Dendritic cell treated with granulocyte-macrophage colony-stimulating factor and Interleukin-4, amounts not matched to agents 40 ng/mL and 50 ng/mL, for 4 days (primary cell): ENCODE measurements at regions of chr5 and their contacts with region 1.

Region 1: DNA sequence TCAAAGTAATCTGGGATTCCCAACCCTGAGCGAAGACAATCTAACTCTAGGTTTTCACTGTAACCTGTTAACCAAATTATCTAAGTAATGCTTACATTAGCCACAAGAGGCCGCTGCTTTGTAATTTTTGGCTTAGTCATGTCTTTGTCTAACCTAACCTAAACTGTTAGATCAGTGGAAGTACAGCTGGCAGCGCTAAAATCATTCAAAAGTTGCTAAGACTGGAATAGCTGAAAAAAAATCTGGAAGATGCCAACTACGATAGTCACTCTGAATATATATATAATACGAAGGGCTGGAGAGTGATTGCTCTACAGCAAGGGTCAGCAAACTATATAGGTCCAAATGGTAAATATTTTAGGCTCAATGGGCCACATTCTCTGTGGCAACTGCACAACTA is 60.2 kb downstream of the FBXO38 start:
- H3K4me3 Mint-ChIP-seq: no peak overlapping the region
- H3K27ac Mint-ChIP-seq: no peak overlapping the region
- H3K4me1 Mint-ChIP-seq: no peaks in the 10 kb centered on the region
- H3K27me3 Mint-ChIP-seq: no peaks in the 10 kb centered on the region

Region 2: GRCh38 chr5:148425808-148426207 is 18.2 kb before region 1 on chr5:
- intact Hi-C with region 1: no loop called
- H3K4me3 Mint-ChIP-seq: no peak overlapping the region
- H3K27ac Mint-ChIP-seq: peak overlapping the region; percentile 28
- H3K4me1 Mint-ChIP-seq: peaks cover 8% of the 10 kb centered on the region
- H3K27me3 Mint-ChIP-seq: no peaks in the 10 kb centered on the region

Region 3: GRCh38 chr5:148482691-148483462 is 38.9 kb after region 1 on chr5:
- intact Hi-C with region 1: loop called (anchors 2 kb)
- H3K4me3 Mint-ChIP-seq: peak overlapping the region; percentile 48
- H3K27ac Mint-ChIP-seq: no peak overlapping the region
- H3K4me1 Mint-ChIP-seq: peaks cover 8% of the 10 kb centered on the region
- H3K27me3 Mint-ChIP-seq: peaks cover 15% of the 10 kb centered on the region

Region 4: DNA sequence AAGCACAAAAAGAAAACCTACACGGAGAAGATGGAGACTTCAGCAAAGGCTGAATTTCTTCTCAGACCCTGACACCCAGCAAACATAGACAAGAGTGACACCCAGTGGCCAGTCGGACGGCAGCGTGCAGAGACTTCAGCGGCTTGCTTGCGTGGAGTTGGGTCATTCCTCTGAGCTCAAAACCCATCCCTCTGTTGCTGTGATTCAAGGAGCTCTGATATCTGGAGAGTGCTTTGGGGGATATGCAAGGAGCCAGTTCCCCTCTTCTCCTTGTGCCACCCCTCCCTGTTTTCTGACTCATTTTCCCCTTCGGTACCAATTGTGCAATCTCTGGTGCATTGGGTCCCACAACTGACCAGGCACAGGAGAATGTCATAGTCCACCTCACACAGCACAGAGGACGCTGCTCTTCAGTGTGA is 591.4 kb after region 1 on chr5:
- intact Hi-C with region 1: loop called (anchors 1 kb)
- H3K4me3 Mint-ChIP-seq: no peak overlapping the region
- H3K27ac Mint-ChIP-seq: peak overlapping the region; percentile 3
- H3K4me1 Mint-ChIP-seq: peaks cover 36% of the 10 kb centered on the region
- H3K27me3 Mint-ChIP-seq: no peaks in the 10 kb centered on the region

Region 5: DNA sequence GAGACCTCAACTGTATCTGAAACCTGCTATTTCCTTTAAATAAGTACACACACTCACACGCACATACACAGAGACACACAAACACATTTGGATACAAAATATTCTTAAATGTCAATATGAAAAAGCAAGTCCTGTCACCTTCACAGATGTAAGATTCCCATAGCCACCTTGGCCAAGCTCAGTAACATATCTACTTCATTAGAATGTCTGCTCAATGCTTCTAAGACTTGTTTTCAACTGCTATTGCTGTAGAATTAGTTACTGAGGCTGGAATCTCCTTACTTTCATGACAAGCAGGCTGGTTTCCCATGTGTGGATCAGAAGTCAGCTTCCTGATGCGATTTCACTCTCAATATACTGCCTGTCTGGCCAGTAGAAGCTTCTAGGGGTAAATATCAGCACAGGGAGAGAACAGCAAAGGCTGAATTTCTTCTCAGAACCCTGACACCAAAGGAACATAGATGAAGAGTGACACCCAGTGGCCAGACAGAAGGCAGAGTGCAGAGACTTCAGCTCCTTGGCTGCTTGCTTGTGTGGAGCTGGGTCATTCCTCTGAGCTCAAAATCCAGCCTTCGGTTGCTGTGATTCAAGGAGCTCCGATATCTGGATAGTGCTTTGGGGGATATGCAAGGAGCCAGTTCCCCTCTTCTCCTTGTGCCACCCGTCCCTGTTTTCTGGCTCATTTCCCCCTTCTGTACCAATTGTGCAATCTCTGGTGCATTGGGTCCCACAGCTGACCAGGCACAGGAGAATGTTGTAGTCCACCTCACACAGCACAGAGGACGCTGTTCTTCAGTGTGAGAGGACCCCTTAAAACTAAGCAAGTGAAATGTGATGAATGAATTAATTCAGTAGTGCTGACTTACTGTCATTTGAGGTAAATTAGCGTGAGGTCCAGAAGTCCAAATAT is 670.7 kb after region 1 on chr5:
- intact Hi-C with region 1: loop called (anchors 10 kb)
- H3K4me3 Mint-ChIP-seq: no peak overlapping the region
- H3K27ac Mint-ChIP-seq: no peak overlapping the region
- H3K4me1 Mint-ChIP-seq: peaks cover 24% of the 10 kb centered on the region
- H3K27me3 Mint-ChIP-seq: no peaks in the 10 kb centered on the region

Region 6: DNA sequence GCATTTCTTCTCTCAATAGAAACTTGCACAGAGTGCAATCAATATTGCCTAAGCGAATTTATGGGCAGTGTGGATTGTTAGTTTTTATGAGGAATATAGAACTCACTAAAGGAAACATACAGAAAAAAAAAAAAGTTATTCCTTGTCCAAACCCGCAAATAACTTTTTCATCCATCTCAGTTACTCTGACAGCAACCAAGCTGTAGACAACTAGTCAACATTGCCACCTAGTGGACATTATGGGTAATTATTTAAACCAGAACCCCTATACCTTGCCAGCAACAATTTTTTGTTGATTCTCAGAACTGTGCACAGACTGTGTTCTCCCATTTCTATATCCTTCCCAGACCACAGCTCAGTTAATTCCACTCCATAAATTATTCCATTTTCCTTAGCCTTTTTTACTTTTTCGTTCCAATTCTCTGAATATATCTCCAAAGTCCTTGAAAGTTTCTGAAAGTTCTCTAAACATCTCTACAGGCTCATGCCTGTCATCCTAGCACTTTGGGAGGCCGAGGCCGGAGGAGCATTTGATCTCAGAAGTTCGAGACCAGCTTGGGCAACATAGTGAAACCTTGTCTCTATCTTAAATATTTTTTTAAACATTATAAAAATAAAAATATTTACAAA is 825.0 kb after region 1 on chr5:
- intact Hi-C with region 1: loop called (anchors 5 kb)
- H3K4me3 Mint-ChIP-seq: no peak overlapping the region
- H3K27ac Mint-ChIP-seq: no peak overlapping the region
- H3K4me1 Mint-ChIP-seq: peaks cover 16% of the 10 kb centered on the region
- H3K27me3 Mint-ChIP-seq: peaks cover 46% of the 10 kb centered on the region